Psoas muscle (tissue), 8 donors: ENCODE measurements at regions of chr7 and their contacts with region 1.

Region 1: DNA sequence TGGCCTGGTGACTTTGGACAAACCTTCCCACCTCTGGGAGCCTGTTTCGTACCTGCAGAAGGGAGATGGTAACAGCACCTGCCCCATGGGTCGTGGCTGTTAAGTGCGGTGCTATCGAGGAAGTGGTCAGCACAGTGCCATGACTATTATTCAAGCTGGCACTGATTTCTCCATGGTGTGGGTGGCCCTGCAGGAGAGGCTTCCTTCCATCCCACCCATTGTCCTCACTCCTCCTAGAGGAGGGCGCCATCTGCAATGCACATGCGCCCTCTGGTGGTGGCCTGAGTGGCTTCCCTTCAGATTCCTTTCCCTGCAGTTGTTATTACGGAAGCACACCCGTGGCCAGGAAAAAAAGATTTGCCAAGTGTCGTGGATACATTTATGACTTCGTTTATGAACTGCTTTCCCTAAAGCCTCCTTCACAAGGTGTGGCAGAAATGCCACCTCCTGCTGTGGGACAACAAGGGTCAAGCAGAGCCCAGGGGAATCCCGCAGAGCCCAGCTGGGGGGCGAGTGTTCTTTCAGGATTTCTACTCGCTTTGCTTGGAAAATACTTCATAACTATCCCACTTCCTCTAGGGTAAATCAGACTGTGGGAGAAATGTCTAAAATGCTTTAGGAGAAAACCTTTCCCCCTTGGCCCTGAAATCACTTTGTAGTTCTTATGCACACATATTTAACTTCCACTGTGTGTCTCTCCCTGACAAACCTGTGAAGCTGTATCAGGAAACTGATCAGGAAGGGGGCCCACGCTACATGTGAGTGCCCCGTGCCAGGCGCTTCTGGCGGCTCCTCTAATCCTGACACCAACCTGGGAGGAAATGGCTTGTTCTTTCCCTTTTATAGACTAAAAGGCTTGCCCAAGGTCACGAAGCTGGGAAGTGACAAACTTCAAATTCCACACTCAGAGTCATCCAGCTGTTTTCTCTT is 98.0 kb upstream of the ANLN start:
- DNase-seq: peak; percentile 87 to 91
- ATAC-seq: peak; percentile 62 to 77 (median 71)
- H3K4me3 ChIP-seq: peak overlapping the region; percentile 51
- H3K27ac ChIP-seq: peak overlapping the region; percentile 77
- H3K4me1 ChIP-seq: peaks cover 53% of the 10 kb centered on the region
- H3K27me3 ChIP-seq: no peaks in the 10 kb centered on the region
- CTCF ChIP-seq: peak; percentile 99

Region 2: DNA sequence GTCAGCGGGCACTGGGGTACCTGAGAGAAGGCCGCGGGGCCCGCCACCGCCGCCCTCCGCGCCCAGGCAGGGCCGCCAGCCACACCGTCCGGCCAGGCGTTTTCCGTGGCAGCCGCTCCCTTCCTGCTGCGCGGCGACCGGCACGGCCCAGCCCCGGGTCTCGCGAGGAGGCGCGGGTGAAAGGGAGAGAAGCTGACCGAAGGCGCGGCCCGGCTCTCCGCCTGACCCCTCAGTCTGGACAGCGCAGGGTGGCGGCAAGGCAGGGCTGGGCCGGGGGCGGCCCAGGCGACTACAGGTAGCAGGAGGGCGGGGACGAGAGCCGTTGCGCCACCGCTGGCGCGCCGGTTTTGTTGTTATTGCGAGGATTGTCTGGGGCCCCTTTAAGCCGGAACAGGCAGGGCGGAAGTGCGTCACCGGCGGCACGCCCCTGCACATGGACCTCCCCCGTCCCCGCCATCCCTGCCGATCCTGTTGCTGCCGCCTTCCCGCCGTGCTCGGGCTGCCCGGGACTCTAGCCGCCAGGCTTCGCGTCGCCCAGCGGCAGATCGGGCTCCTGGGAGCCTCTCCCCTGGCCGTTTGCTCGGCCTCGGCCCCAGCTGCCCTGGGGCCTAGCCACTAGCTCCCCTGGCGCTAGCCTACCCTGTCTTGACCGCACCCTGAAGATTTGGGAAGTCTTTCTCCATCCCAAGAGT is 596.7 kb before region 1 on chr7 and contains the start of gene HERPUD2:
- intact Hi-C with region 1: loop called in 1 of 2 experiments (anchors 10 kb)
- DNase-seq: peak; percentile 92 to 96
- ATAC-seq: peak; percentile 96 to 97 (median 97)
- H3K4me3 ChIP-seq: peak within 1 kb of the TSS; percentile 96
- H3K27ac ChIP-seq: peak within 1 kb of the TSS; percentile 96
- H3K4me1 ChIP-seq: peaks cover 32% of the 10 kb centered on the region
- H3K27me3 ChIP-seq: no peaks in the 10 kb centered on the region
- CTCF ChIP-seq: no peak
- total RNA-seq, gene HERPUD2: 12.5 to 21.5 (median 16.4) TPM

Region 3: DNA sequence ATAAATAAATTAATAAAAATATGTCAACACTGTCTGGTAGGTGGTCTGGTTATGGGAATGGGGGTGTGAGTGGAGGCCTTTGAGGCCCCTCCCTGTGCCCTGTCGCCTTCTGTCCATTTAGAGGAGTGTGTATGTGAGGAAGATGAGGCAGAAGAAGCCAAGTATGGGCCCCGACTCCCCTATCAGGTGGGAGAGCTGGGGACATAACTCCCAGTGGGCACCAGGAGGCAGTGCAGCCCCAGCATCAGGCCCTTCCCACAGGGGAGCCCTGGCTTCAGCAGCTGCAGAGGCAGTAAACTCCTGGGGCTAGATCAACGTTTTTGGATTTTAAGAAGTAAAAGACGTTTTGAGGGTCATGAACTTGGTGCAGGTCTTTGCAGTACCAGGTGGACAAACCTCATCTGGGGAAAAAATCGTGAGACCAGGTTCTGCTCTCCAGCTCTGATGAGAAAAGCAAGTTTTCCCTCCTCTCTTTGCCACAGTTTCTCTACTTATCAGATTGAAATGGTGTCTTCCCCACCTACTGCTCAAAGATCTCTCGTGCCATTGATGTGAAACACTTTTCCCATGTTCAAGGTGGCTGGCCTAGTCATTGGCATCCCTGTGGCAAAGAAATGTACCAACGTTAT is 306.4 kb before region 1 on chr7:
- intact Hi-C with region 1: loop called (anchors 1 to 2 kb)
- DNase-seq: peak; percentile 79 to 90
- ATAC-seq: peak; percentile 89 to 96 (median 91)
- H3K4me3 ChIP-seq: no peak overlapping the region
- H3K27ac ChIP-seq: no peak overlapping the region
- H3K4me1 ChIP-seq: peaks cover 19% of the 10 kb centered on the region
- H3K27me3 ChIP-seq: no peaks in the 10 kb centered on the region
- CTCF ChIP-seq: peak; percentile 90

Region 4: GRCh38 chr7:36021367-36021766 is 270.3 kb before region 1 on chr7:
- intact Hi-C with region 1: loop called (anchors 1 to 2 kb)
- DNase-seq: no peak
- ATAC-seq: peak; percentile 58 to 91 (median 78)
- H3K4me3 ChIP-seq: no peak overlapping the region
- H3K27ac ChIP-seq: no peak overlapping the region
- H3K4me1 ChIP-seq: peaks cover 7% of the 10 kb centered on the region
- H3K27me3 ChIP-seq: no peaks in the 10 kb centered on the region
- CTCF ChIP-seq: peak; percentile 41

Region 5: DNA sequence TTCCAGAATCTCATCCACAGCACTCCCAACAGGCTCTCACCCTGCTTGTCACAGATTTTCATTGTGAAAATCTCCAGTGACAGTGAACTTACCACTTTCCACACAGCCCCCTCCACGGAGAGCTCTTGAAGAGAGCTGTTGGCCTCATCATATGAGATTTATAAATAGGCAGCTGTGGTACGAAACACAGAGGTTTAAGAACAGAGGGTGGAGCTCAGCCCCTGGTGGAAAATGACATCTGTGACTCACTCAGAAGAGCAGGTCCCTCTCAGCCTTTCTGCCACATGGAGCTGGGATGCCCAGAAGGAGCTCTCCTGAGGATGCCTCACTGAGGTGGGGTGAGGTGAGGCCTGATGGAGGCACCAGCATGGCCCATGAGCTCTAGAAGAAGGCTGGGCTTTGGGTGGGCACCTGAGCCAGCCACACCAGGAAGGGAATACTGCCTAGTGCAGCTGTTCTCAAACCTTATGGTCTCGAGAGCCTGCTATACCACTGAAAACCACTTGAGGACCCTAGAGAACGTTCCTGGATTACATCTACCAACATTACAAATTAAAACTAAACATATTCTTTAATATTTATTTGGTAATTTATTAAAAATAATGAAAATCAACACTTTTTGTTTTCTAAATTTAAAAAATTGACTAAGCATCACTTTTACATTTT is 164.4 kb before region 1 on chr7:
- intact Hi-C with region 1: loop called in 1 of 2 experiments (anchors 1 kb)
- DNase-seq: peak in 1 of 2 donors; percentile 58
- ATAC-seq: peak; percentile 19 to 64 (median 56)
- H3K4me3 ChIP-seq: no peak overlapping the region
- H3K27ac ChIP-seq: peak overlapping the region; percentile 95
- H3K4me1 ChIP-seq: peaks cover 49% of the 10 kb centered on the region
- H3K27me3 ChIP-seq: no peaks in the 10 kb centered on the region
- CTCF ChIP-seq: peak; percentile 50

Region 6: DNA sequence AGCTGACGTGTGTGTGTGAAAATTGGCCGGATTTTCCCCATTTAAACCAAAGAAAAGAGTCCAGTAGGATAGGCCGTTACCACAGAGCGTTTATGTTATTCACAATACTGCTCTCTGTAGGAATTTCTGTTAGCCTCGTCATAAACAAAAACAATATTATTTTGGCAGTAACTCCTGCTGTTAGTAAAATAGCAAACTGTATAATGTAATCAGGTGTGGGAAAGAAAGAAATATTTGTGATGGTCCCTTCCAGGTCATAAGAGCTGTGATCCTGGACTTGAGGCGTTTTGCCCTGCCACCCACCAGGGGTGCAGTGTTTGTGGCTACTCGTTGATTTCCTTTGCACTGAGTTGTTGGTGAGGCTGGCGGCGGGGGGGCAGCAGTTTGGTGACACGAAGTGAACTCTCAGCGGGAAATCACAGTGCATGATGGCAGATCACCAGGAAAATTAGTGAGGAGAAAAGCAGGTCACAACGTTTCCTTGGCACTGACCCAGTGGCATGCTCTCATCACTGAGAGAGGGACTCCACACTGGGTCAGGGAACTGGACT is 135.8 kb before region 1 on chr7:
- intact Hi-C with region 1: loop called in 1 of 2 experiments (anchors 5 kb)
- DNase-seq: peak; percentile 56 to 89
- ATAC-seq: peak in 2 of 4 donors; percentile 14 to 33
- H3K4me3 ChIP-seq: peak overlapping the region; percentile 93
- H3K27ac ChIP-seq: peak overlapping the region; percentile 95
- H3K4me1 ChIP-seq: peaks cover 70% of the 10 kb centered on the region
- H3K27me3 ChIP-seq: no peaks in the 10 kb centered on the region
- CTCF ChIP-seq: no peak

Region 7: GRCh38 chr7:36318116-36318515 is 26.5 kb after region 1 on chr7:
- intact Hi-C with region 1: loop called in 1 of 2 experiments (anchors 2 kb)
- DNase-seq: no peak
- ATAC-seq: no peak
- H3K4me3 ChIP-seq: no peak overlapping the region
- H3K27ac ChIP-seq: no peak overlapping the region
- H3K4me1 ChIP-seq: no peaks in the 10 kb centered on the region
- H3K27me3 ChIP-seq: no peaks in the 10 kb centered on the region
- CTCF ChIP-seq: no peak